ENCODE measurements at regions of chr4 and their contacts with region 1.

Region 1: DNA sequence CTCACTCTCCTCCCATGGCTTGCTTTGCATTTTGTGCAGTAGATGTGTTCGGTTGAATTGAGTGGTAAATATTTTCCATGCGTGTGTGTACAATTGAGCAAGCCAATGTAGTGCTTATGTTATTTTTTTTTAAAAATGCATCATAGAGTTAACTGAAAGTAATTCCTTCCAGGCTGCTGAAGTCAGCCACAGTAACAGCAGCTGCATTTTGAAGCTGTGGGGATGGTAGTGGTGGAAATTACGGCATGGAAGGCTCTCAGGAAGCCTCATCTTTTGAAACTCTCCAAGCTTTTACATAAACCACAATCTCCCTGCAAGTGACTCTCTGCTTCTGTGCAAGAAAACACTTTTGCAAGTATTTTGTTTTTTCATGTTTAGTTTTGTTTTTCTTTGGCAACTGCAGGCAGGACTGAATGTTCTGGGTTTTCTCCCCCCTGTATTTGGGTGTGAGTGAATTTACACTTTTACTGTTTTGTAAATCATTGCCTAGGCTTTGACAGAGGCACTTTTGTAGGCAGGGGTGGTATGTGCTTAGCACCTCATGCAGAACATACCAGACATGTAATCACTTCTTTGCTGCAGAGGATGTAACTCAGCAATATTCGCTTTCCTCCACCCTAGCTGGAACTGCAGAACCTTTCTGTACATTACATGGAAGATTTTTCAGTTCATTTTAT is 56.2 kb downstream of the LRRC66 start:
- DNase-seq: no peak
- ATAC-seq: no peak
- H3K4me3 ChIP-seq: no peak overlapping the region
- H3K27ac ChIP-seq: no peak overlapping the region
- H3K4me1 ChIP-seq: peaks cover 0 to 2% (median 0%) of the 10 kb centered on the region in 12 donors
- H3K27me3 ChIP-seq: no peaks in the 10 kb centered on the region
- CTCF ChIP-seq: no peak
- POLR2A ChIP-seq: no peak

Region 2: GRCh38 chr4:51906167-51906958 is 57.6 kb before region 1 on chr4:
- intact Hi-C with region 1: loop called in 1 of 10 experiments (anchors 10 kb)
- DNase-seq: no peak
- ATAC-seq: peak in 1 of 4 donors; percentile 33
- H3K4me3 ChIP-seq: no peak overlapping the region
- H3K27ac ChIP-seq: no peak overlapping the region
- H3K4me1 ChIP-seq: peaks cover 0 to 20% (median 4%) of the 10 kb centered on the region in 12 donors
- H3K27me3 ChIP-seq: no peaks in the 10 kb centered on the region
- CTCF ChIP-seq: no peak
- POLR2A ChIP-seq: no peak

Region 3: DNA sequence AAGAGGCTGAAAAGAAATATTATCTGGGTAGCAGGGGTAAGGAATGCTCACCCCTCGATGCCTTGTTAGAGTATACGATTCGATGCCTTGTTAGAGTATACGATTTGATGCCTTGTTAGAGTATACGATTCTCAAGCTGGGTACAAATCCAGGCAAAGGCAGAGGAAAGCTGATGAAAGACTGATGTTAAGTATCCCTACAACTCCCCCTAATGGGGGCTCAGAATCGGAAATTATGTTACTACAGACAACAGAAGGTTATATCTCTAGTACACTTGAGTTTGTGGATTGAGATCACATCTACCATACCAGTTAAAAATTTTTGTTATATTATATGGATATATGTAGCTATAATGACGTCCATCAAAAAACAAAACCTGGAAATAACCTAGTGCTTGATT is 51.4 kb after region 1 on chr4:
- intact Hi-C with region 1: no loop called
- DNase-seq: no peak
- ATAC-seq: no peak
- H3K4me3 ChIP-seq: no peak overlapping the region
- H3K27ac ChIP-seq: no peak overlapping the region
- H3K4me1 ChIP-seq: peaks cover 0 to 12% (median 0%) of the 10 kb centered on the region in 12 donors
- H3K27me3 ChIP-seq: no peaks in the 10 kb centered on the region
- CTCF ChIP-seq: peak in 2 of 12 donors; percentile 14 to 15
- POLR2A ChIP-seq: no peak

Measured in heart left ventricle (tissue), 16 donors.